ENCODE measurements at regions of chr5 and their contacts with region 1.

Region 1: GRCh38 chr5:134249469-134250379 is 23.9 kb upstream of the PPP2CA start:
- DNase-seq: peak; percentile 59
- H3K4me3 Mint-ChIP-seq: no peak overlapping the region
- H3K27ac Mint-ChIP-seq: peak overlapping the region; percentile 54
- H3K4me1 Mint-ChIP-seq: peaks cover 51% of the 10 kb centered on the region
- H3K27me3 Mint-ChIP-seq: no peaks in the 10 kb centered on the region
- CTCF ChIP-seq: no peak

Region 2: DNA sequence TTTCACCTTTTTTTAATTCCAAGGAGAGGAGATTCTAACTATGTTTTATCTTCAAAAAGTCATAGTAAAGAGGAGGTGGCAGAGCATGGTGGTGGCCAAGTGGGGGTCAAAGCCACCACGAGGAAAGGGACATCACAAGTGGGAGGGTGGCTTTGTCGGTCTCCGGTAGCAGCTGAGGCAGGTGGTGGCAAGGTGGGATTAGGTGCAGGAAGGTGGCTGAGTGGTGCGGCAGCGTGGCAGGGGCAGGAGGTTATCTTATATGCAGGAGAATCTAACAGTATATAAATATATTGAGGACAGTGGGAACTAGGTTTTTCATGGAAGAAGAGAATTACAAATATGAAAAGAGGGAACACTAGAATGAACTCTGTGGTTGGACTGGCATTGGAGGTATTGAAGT is 834.2 kb before region 1 on chr5:
- CTCF ChIA-PET with region 1: no interaction called
- POLR2A ChIA-PET with region 1: no interaction called
- intact Hi-C with region 1: no loop called
- DNase-seq: no peak
- H3K4me3 Mint-ChIP-seq: no peak overlapping the region
- H3K27ac Mint-ChIP-seq: no peak overlapping the region
- H3K4me1 Mint-ChIP-seq: no peaks in the 10 kb centered on the region
- H3K27me3 Mint-ChIP-seq: peaks cover 79% of the 10 kb centered on the region
- CTCF ChIP-seq: no peak

Region 3: GRCh38 chr5:134267366-134268018 is 17.8 kb after region 1 on chr5:
- CTCF ChIA-PET with region 1: interaction called, 4 read pairs
- POLR2A ChIA-PET with region 1: interaction called, 24 read pairs
- intact Hi-C with region 1: no loop called
- DNase-seq: peak; percentile 64
- H3K4me3 Mint-ChIP-seq: no peak overlapping the region
- H3K27ac Mint-ChIP-seq: peak overlapping the region; percentile 4
- H3K4me1 Mint-ChIP-seq: peaks cover 8% of the 10 kb centered on the region
- H3K27me3 Mint-ChIP-seq: no peaks in the 10 kb centered on the region
- CTCF ChIP-seq: no peak

Region 4: DNA sequence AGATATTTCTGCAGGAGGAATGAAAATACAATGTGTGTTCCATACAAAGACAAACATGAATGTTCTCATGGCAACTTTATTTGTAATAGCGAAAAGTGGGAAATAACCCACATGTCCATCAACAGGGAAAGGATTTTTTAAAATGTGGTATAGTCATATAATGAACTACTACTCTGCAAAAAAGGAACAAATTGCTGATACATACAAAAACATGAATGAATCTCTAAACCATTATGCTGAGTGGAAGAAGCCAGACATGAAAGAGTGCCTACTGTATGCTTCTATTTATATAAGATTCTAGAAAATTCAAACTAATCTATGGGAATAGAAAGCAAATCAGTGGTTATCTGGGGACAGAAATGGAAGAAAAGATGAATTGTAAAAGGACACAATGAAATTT is 64.7 kb after region 1 on chr5:
- CTCF ChIA-PET with region 1: no interaction called
- POLR2A ChIA-PET with region 1: no interaction called
- intact Hi-C with region 1: no loop called
- DNase-seq: no peak
- H3K4me3 Mint-ChIP-seq: no peak overlapping the region
- H3K27ac Mint-ChIP-seq: no peak overlapping the region
- H3K4me1 Mint-ChIP-seq: no peaks in the 10 kb centered on the region
- H3K27me3 Mint-ChIP-seq: no peaks in the 10 kb centered on the region
- CTCF ChIP-seq: no peak

Measured in MCF 10A (cell line).